WTC11 (cell line): ENCODE measurements at regions of chr5 and their contacts with region 1.

Region 1: DNA sequence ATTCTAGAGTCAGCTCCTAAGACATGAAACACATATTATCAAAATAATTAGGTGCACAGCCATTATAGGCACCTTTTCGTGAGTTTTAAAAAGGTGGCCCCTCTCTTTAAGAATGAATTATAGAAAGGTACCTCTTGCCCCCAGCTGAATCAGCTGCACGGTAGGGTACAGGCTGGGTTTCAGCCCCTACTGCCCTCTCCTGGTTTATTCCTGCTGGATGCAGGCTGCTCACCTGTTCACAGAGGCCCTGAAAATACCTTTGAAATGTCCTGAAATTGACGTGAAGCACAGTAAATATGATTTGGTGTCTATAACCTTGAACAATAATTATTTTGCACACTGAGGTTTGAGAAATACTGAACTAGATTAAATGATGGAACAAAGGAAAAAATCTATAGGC is 504.8 kb upstream of the SGCD start:
- DNase-seq: peak; percentile 20
- ATAC-seq: peak; percentile 93
- H3K4me3 Mint-ChIP-seq: no peak overlapping the region
- H3K27ac Mint-ChIP-seq: no peak overlapping the region
- H3K4me1 Mint-ChIP-seq: no peaks in the 10 kb centered on the region
- H3K27me3 Mint-ChIP-seq: no peaks in the 10 kb centered on the region
- CTCF ChIP-seq: no peak

Region 2: DNA sequence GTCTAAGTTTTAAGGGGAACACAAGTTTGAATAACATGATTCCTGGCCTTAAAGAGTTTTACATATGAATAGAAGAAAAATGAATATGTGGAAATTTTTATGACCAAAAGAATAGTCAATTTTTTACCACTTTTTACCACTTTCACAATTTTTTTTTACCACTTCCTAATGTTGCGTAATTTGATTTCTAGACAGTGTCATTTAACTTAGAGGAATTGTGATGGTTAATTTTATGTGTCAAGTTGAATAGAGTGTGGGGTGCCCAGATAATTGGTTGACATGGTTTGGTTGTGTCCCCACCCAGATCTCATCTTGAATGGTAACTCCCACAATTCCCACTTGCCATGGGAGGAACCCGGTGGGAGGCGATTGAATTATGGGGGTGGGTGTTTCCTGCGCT is 392.0 kb before region 1 on chr5:
- CTCF ChIA-PET with region 1: no interaction called
- POLR2A ChIA-PET with region 1: no interaction called
- DNase-seq: no peak
- ATAC-seq: no peak
- H3K4me3 Mint-ChIP-seq: no peak overlapping the region
- H3K27ac Mint-ChIP-seq: no peak overlapping the region
- H3K4me1 Mint-ChIP-seq: peaks cover 7% of the 10 kb centered on the region; the same call in 1 of the 2 replicates
- H3K27me3 Mint-ChIP-seq: no peaks in the 10 kb centered on the region
- CTCF ChIP-seq: no peak

Region 3: GRCh38 chr5:156800929-156801328 is 978.8 kb after region 1 on chr5:
- CTCF ChIA-PET with region 1: no interaction called
- POLR2A ChIA-PET with region 1: interaction called, 10 read pairs
- DNase-seq: peak; percentile 60
- ATAC-seq: no peak
- H3K4me3 Mint-ChIP-seq: no peak overlapping the region
- H3K27ac Mint-ChIP-seq: peak overlapping the region; percentile 94
- H3K4me1 Mint-ChIP-seq: peaks cover 81% of the 10 kb centered on the region
- H3K27me3 Mint-ChIP-seq: no peaks in the 10 kb centered on the region
- CTCF ChIP-seq: no peak